Naive thymus-derived CD4-positive, alpha-beta T cell (primary cell): ENCODE measurements at regions of chr13 and their contacts with region 1.

Region 1: GRCh38 chr13:40388617-40389016 is 277.8 kb downstream of the FOXO1 start:
- DNase-seq: peak; percentile 36 to 88 (median 82)
- ATAC-seq: peak; percentile 96
- H3K4me3 ChIP-seq: peak overlapping the region; percentile 80
- H3K4me3 Mint-ChIP-seq: peak overlapping the region; percentile 80 to 95 (median 88)
- H3K27ac ChIP-seq: peak overlapping the region; percentile 78
- H3K27ac Mint-ChIP-seq: peak overlapping the region; percentile 95 to 100 (median 98)
- H3K4me1 ChIP-seq: peaks cover 16 to 23% of the 10 kb centered on the region in 2 donors
- H3K4me1 Mint-ChIP-seq: peaks cover 35 to 76% (median 60%) of the 10 kb centered on the region in 7 donors
- H3K27me3 ChIP-seq: no peaks in the 10 kb centered on the region
- H3K27me3 Mint-ChIP-seq: no peaks in the 10 kb centered on the region

Region 2: GRCh38 chr13:39037880-39038568 is 1350.6 kb before region 1 on chr13 and contains the starts of genes NHLRC3 and PROSER1:
- CTCF ChIA-PET with region 1: no interaction called
- POLR2A ChIA-PET with region 1: no interaction called
- intact Hi-C with region 1: loop called in 1 of 2 experiments (anchors 5 kb)
- DNase-seq: peak; percentile 60 to 86 (median 78)
- ATAC-seq: peak; percentile 87
- H3K4me3 ChIP-seq: peak within 1 kb of the TSS; percentile 95
- H3K4me3 Mint-ChIP-seq: peak within 1 kb of the TSS; percentile 92 to 99 (median 96)
- H3K27ac ChIP-seq: peak within 1 kb of the TSS; percentile 82
- H3K27ac Mint-ChIP-seq: peak within 1 kb of the TSS; percentile 92 to 97 (median 95)
- H3K4me1 ChIP-seq: peaks cover 7 to 28% of the 10 kb centered on the region in 2 donors
- H3K4me1 Mint-ChIP-seq: peaks cover 36 to 78% (median 65%) of the 10 kb centered on the region in 7 donors
- H3K27me3 ChIP-seq: no peaks in the 10 kb centered on the region
- H3K27me3 Mint-ChIP-seq: no peaks in the 10 kb centered on the region
- total RNA-seq, gene NHLRC3: 13.0 to 30.6 (median 23.6) TPM
- total RNA-seq, gene PROSER1: 36.1 to 65.7 (median 47.3) TPM

Region 3: DNA sequence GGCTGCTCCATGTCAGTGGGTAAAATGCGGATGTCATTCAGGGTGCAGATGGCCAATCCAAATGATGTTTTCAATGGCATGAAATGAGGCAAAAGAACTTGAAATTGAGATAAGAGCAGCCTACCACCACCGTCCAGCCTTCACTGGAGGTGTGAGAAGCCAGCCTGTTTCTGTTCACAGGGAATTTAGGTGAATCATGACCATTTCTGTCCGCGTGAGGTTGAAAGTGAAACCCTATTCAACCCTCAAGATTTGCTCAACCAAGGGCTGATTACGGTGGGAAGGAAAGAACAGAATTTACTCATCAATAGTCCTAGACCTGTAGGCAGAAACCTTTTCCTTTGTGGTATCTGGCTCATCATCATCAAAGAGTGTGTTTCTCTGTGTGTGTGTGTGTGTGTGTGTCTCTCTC is 362.4 kb before region 1 on chr13:
- CTCF ChIA-PET with region 1: no interaction called
- POLR2A ChIA-PET with region 1: no interaction called
- intact Hi-C with region 1: loop called in 1 of 2 experiments (anchors 2 kb)
- DNase-seq: peak in 8 of 9 donors; percentile 8 to 63 (median 32)
- ATAC-seq: peak; percentile 77
- H3K4me3 ChIP-seq: peak overlapping the region; percentile 43
- H3K4me3 Mint-ChIP-seq: peak overlapping the region; percentile 39 to 79 (median 68)
- H3K27ac ChIP-seq: no peak overlapping the region
- H3K27ac Mint-ChIP-seq: peak overlapping the region; percentile 24 to 78 (median 44)
- H3K4me1 ChIP-seq: peaks cover 0 to 10% of the 10 kb centered on the region in 2 donors
- H3K4me1 Mint-ChIP-seq: peaks cover 6 to 34% (median 22%) of the 10 kb centered on the region in 7 donors
- H3K27me3 ChIP-seq: no peaks in the 10 kb centered on the region
- H3K27me3 Mint-ChIP-seq: peaks cover 0 to 35% (median 0%) of the 10 kb centered on the region in 5 donors

Region 4: DNA sequence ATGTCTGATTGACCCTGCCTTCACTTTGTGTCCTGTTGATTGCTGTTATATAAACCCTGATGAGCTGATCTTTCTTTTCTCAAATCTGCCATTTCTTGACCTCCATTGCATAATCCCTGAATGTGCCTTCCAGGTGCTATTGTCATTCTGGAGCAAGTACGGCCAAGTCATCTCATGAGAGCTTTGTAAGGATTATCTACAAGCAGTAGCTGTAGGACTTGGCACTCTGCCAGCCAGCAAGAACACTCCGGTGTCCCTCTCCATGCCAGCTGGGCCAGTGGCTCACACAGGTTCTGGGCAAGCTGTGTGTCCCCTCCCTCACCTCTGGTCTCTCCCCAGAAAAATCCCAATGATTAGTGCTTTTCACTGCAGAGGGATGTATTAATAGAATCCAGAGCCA is 70.3 kb before region 1 on chr13:
- CTCF ChIA-PET with region 1: interaction called, 3 read pairs
- POLR2A ChIA-PET with region 1: no interaction called
- intact Hi-C with region 1: loop called (anchors 1 to 2 kb)
- DNase-seq: no peak
- ATAC-seq: no peak
- H3K4me3 ChIP-seq: no peak overlapping the region
- H3K4me3 Mint-ChIP-seq: peak overlapping the region in 1 of 10 donors; percentile 20
- H3K27ac ChIP-seq: no peak overlapping the region
- H3K27ac Mint-ChIP-seq: peak overlapping the region in 5 of 9 donors; percentile 17 to 85 (median 67)
- H3K4me1 ChIP-seq: peaks cover 5 to 35% of the 10 kb centered on the region in 2 donors
- H3K4me1 Mint-ChIP-seq: peaks cover 39 to 71% (median 68%) of the 10 kb centered on the region in 7 donors
- H3K27me3 ChIP-seq: no peaks in the 10 kb centered on the region
- H3K27me3 Mint-ChIP-seq: no peaks in the 10 kb centered on the region

Region 5: GRCh38 chr13:40406405-40407180 is 18.0 kb after region 1 on chr13:
- CTCF ChIA-PET with region 1: no interaction called
- POLR2A ChIA-PET with region 1: no interaction called
- intact Hi-C with region 1: no loop called
- DNase-seq: no peak
- ATAC-seq: no peak
- H3K4me3 ChIP-seq: no peak overlapping the region
- H3K4me3 Mint-ChIP-seq: no peak overlapping the region
- H3K27ac ChIP-seq: no peak overlapping the region
- H3K27ac Mint-ChIP-seq: no peak overlapping the region
- H3K4me1 ChIP-seq: no peaks in the 10 kb centered on the region
- H3K4me1 Mint-ChIP-seq: peaks cover 10 to 43% (median 34%) of the 10 kb centered on the region in 7 donors
- H3K27me3 ChIP-seq: no peaks in the 10 kb centered on the region
- H3K27me3 Mint-ChIP-seq: no peaks in the 10 kb centered on the region

Region 6: DNA sequence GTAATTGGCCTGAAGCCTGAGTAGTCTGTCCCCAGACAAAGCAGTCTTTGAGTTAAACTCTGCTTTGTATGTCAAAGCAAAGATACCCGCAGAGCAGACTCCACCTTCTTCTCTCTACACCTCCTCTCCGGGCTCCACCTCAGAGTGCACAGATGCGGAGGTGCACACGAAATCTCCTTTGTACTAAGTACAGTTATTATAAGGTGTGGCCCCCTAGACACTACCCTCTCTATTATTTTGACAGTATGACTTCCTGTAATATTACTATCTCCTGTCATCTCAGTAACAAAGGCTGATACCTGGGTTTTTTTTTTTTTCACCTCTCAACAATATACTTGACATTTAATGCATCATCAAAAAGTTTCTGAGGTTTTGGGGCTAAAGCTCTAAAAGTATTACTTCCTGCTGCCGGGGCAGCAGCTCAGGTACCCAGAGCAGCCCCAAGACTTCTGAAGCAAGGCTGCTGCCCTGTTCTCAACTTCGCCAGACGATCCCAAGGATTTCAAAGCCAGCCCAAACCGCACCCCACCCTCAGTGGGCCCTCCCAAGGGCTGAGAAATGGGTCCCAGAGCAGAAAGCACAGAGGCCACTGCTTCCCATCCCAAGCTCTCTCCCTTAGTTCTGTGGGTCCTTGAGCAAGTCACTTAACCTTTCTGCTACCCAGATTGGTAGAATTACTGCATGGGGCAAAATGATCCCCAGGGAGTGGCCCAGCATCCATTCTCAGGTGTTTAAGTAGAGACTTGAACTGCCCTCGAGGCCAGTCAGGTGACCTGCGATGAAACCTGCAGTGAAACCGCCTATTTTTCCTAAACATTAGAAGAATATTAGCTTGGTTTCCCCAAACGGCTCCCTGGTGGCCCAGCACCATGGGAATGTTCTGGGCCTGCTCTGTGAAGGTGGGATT is 97.2 kb after region 1 on chr13:
- CTCF ChIA-PET with region 1: interaction called, 3 read pairs
- POLR2A ChIA-PET with region 1: interaction called, 7 read pairs
- intact Hi-C with region 1: loop called (anchors 1 kb)
- DNase-seq: peak; percentile 29 to 93 (median 88)
- ATAC-seq: peak; percentile 97
- H3K4me3 ChIP-seq: peak overlapping the region; percentile 28
- H3K4me3 Mint-ChIP-seq: peak overlapping the region; percentile 67 to 88 (median 78)
- H3K27ac ChIP-seq: peak overlapping the region; percentile 71
- H3K27ac Mint-ChIP-seq: peak overlapping the region; percentile 91 to 100 (median 96)
- H3K4me1 ChIP-seq: peaks cover 45 to 89% of the 10 kb centered on the region in 2 donors
- H3K4me1 Mint-ChIP-seq: peaks cover 61 to 99% (median 90%) of the 10 kb centered on the region in 7 donors
- H3K27me3 ChIP-seq: no peaks in the 10 kb centered on the region
- H3K27me3 Mint-ChIP-seq: no peaks in the 10 kb centered on the region

Region 7: GRCh38 chr13:40613192-40613818 is 224.7 kb after region 1 on chr13:
- CTCF ChIA-PET with region 1: no interaction called
- POLR2A ChIA-PET with region 1: interaction called, 9 read pairs
- intact Hi-C with region 1: loop called in 1 of 2 experiments (anchors 2 kb)
- DNase-seq: peak in 8 of 9 donors; percentile 44 to 76 (median 64)
- ATAC-seq: peak; percentile 86
- H3K4me3 ChIP-seq: peak overlapping the region; percentile 26
- H3K4me3 Mint-ChIP-seq: peak overlapping the region; percentile 72 to 88 (median 82)
- H3K27ac ChIP-seq: peak overlapping the region; percentile 72
- H3K27ac Mint-ChIP-seq: peak overlapping the region; percentile 76 to 98 (median 92)
- H3K4me1 ChIP-seq: peaks cover 64 to 83% of the 10 kb centered on the region in 2 donors
- H3K4me1 Mint-ChIP-seq: peaks cover 59 to 100% (median 95%) of the 10 kb centered on the region in 7 donors
- H3K27me3 ChIP-seq: no peaks in the 10 kb centered on the region
- H3K27me3 Mint-ChIP-seq: no peaks in the 10 kb centered on the region